Ovary (tissue), 10 donors: ENCODE measurements at regions of chr1 and their contacts with region 1.

Region 1: GRCh38 chr1:19390901-19391595 is 78.9 kb downstream of the SLC66A1 start:
- DNase-seq: peak; percentile 49 to 75 (median 69)
- H3K4me3 ChIP-seq: peak overlapping the region; percentile 15
- H3K27ac ChIP-seq: peak overlapping the region; percentile 1 to 84
- H3K4me1 ChIP-seq: peaks cover 43% of the 10 kb centered on the region
- H3K27me3 ChIP-seq: no peaks in the 10 kb centered on the region
- CTCF ChIP-seq: peak; percentile 68 to 92 (median 79)
- EP300 ChIP-seq: no peak
- POLR2A ChIP-seq: no peak

Region 2: GRCh38 chr1:19113697-19114092 is 277.4 kb before region 1 on chr1:
- intact Hi-C with region 1: no loop called
- DNase-seq: no peak
- H3K4me3 ChIP-seq: no peak overlapping the region
- H3K27ac ChIP-seq: no peak overlapping the region
- H3K4me1 ChIP-seq: no peaks in the 10 kb centered on the region
- H3K27me3 ChIP-seq: no peaks in the 10 kb centered on the region
- CTCF ChIP-seq: no peak
- EP300 ChIP-seq: no peak
- POLR2A ChIP-seq: no peak

Region 3: DNA sequence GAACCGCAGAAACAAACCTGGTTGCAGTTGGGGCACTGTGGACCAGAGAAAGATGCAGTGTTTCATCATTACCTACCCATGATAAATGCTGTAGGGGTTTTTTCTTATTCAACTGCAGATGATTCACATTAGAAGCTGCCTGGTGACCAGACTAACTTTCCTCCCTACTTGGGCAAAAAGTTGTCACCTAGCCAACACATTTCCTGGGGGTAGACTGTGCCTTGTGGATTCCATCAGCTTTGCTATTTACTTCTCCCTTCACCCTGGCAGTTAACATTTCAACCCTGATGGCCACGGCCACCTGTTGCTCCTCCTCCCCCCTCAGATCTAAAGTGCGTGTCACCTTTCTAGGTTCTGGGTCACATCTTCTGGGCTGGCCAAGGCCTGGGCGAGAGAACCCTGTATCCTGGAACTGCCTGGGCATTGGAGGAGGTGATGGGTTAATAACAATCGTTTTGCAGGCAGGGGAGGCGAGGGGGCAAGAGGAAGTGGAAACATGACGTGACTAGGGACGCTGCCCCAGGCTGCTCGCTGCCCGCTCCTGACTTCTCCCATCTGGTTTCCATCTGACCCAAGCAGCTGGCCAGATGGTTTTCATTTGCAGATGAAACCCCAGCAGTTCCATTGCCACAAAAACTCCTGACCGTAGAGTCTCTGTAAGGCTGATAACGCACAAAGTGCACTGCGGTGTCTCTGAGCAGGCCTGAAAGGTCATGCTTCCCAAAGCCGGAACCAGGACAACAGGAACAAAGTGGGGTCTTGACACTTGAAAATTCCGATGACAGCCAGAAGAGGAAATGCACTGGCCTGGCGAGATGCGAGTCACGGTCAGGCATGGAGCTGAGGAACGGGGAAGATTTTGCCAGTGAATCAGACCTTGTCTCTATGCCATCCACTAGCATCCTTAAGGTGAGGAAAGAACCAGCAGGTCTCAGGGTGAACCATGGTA is 57.7 kb after region 1 on chr1:
- intact Hi-C with region 1: loop called in 1 of 4 experiments (anchors 10 kb)
- DNase-seq: peak in 4 of 5 donors; percentile 58 to 71 (median 62)
- H3K4me3 ChIP-seq: no peak overlapping the region
- H3K27ac ChIP-seq: peak overlapping the region; percentile 68 to 89
- H3K4me1 ChIP-seq: peaks cover 56% of the 10 kb centered on the region
- H3K27me3 ChIP-seq: no peaks in the 10 kb centered on the region
- CTCF ChIP-seq: no peak
- EP300 ChIP-seq: no peak
- POLR2A ChIP-seq: no peak

Region 4: DNA sequence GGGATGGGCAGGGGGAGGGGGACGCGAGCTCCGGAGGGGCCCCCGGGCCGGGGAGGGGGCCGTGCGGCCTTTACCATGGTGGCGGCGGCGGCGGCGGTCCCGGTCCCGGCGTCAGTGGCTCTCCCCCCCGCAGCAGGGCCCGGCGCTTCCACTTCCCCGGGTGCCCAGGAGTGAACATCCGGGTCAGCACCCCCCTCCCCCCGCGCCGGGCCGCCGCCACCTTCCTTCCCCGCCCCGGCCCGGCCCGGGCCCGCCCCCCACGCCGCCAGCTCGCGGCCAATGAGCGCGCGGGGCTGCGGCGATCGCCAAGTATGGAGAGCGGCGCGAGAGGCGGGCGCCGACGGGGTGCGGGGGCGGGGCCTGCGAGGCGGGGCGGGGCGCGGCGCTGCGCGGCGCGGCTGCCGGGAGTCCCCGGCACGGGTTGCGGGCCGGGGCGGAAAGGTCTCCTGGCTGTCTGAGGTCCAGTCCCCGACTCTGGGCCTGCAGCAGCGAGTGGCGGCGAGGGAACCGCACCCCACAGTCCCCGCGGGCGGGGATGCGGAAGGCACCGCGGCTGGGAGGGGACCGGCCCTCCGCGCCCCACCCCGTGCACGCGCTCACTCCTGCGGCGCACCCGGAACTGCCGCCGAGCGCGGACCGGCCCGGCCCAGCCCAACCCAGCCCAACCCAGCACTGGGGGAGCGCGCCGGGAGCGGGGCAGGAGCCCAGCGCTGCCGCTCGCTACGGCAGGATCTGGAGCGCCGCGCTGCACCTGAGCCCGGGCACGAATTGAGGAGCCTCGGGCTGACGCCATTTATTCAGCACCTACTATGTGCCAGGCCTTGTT is 94.5 kb after region 1 on chr1 and contains the start of gene CAPZB:
- intact Hi-C with region 1: loop called (anchors 5 to 10 kb)
- DNase-seq: peak; percentile 95 to 97 (median 96)
- H3K4me3 ChIP-seq: peak within 1 kb of the TSS; percentile 98
- H3K27ac ChIP-seq: peak within 1 kb of the TSS; percentile 92 to 94
- H3K4me1 ChIP-seq: peaks cover 29% of the 10 kb centered on the region
- H3K27me3 ChIP-seq: no peaks in the 10 kb centered on the region
- CTCF ChIP-seq: no peak
- EP300 ChIP-seq: no peak
- POLR2A ChIP-seq: peak; percentile 86
- total RNA-seq, gene CAPZB: 85.0 to 347 (median 258) TPM

Region 5: DNA sequence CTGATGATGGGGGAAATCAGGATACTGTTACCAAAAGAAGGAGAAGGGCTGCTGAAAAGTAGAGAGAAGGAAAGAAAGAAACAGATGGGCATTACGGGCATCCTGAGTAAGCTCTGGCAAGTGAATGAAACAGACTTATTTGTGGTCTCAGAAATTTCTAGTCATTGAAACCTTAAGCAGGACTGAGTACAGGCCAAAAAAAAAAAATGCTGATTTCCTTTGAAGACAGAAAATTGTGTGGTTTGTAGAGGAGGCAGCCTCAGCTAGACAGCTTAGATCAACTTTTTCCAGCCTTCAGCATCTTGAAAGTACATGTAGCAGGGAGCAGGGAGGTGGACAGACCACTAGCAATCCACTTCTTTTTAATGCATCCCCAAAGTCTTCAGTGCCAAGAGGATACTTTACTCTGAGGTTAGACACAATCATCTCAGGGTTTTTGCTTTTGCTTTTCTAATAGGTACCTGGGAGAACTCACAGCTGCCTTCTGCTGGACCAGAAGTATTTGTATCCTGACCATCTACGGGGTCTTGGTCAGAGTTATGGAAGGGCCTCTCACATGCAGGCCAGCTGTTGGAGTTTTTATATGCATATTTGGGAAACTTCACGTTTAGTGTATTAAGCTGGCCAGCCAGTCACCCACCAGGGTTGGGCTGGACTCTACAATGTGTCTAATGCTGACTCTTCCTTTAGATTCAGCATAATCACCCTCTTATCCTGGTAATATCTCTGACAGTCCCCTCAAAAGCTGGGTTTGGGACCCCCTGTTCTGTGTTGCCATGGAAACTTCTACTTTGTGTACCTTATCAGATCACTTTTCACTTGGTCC is 105.0 kb after region 1 on chr1:
- intact Hi-C with region 1: loop called in 2 of 4 experiments (anchors 5 to 10 kb)
- DNase-seq: peak in 1 of 5 donors; percentile 26
- H3K4me3 ChIP-seq: no peak overlapping the region
- H3K27ac ChIP-seq: peak overlapping the region; percentile 71 to 80
- H3K4me1 ChIP-seq: peaks cover 15% of the 10 kb centered on the region
- H3K27me3 ChIP-seq: no peaks in the 10 kb centered on the region
- CTCF ChIP-seq: no peak
- EP300 ChIP-seq: no peak
- POLR2A ChIP-seq: no peak

Region 6: GRCh38 chr1:19651141-19651737 is 260.2 kb after region 1 on chr1:
- intact Hi-C with region 1: loop called in 2 of 4 experiments (anchors 5 kb)
- DNase-seq: peak; percentile 63 to 79 (median 75)
- H3K4me3 ChIP-seq: peak overlapping the region; percentile 3
- H3K27ac ChIP-seq: peak overlapping the region; percentile 50 to 80
- H3K4me1 ChIP-seq: peaks cover 42% of the 10 kb centered on the region
- H3K27me3 ChIP-seq: no peaks in the 10 kb centered on the region
- CTCF ChIP-seq: peak in 2 of 3 donors; percentile 61 to 76
- EP300 ChIP-seq: no peak
- POLR2A ChIP-seq: no peak